Ovary (tissue), 10 donors: ENCODE measurements at regions of chr9 and their contacts with region 1.

Region 1: DNA sequence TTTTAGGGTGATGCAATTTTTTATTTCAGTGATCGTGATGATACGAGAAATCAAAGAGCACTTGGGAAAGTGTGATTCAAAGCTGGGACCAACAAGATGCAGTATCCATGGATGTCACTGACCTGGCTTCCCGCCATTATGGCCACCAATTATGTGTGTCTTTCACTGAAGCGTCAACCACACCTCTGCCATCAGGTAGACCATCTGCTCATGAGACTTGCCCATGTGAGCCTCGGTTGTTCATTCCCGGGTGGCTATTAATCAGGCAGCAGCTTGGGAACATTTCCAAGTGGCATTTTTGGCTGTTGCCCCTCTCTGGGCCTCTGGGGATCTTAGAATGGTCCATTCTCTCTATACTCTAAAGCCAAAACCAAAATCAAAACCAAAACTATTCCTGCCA is 436.0 kb upstream of the ADAMTSL1 start:
- DNase-seq: no peak
- H3K4me3 ChIP-seq: no peak overlapping the region
- H3K27ac ChIP-seq: no peak overlapping the region
- H3K4me1 ChIP-seq: no peaks in the 10 kb centered on the region
- H3K27me3 ChIP-seq: no peaks in the 10 kb centered on the region
- CTCF ChIP-seq: no peak
- EP300 ChIP-seq: no peak
- POLR2A ChIP-seq: no peak

Region 2: GRCh38 chr9:17986595-17986994 is 51.4 kb before region 1 on chr9:
- intact Hi-C with region 1: loop called in 1 of 4 experiments (anchors 2 kb)
- DNase-seq: no peak
- H3K4me3 ChIP-seq: no peak overlapping the region
- H3K27ac ChIP-seq: no peak overlapping the region
- H3K4me1 ChIP-seq: no peaks in the 10 kb centered on the region
- H3K27me3 ChIP-seq: no peaks in the 10 kb centered on the region
- CTCF ChIP-seq: no peak
- EP300 ChIP-seq: no peak
- POLR2A ChIP-seq: no peak